OCI-LY7 (cell line): ENCODE measurements at regions of chr22 and their contacts with region 1.

Region 1: DNA sequence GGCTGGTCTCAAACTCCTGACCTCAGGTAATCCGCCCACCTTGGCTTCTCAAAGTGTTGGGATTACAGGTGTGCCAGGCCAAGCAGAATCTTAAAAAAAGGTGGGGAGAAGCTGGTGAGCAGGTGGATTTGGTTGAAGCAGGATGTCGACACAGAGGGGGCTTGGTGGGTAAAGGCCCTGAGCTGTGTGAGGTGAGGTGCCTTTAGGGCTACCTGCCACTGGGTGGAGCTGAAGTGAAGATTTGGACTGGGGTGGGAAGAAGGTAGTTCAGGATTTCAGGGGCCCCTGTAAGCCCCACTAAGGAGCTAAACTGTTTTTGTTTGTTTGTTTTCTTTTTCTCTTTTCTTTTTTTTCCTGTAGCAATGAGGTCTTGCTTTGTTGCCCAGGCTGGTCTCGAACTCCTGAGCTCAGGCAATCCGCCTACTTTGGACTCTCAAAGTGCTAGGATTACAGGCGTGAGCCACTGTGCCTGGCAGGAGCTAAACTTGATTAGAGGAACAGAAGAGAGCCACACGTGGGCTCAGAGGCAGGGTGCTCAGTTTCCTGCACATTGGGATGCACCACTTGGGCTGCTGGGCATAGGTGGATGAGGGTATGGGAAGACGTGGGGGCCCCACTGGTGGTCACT is 6.0 kb downstream of the P2RX6 start:
- DNase-seq: peak; percentile 56
- H3K4me3 ChIP-seq: no peak overlapping the region
- H3K27ac ChIP-seq: no peak overlapping the region
- H3K4me1 ChIP-seq: peaks cover 4% of the 10 kb centered on the region
- CTCF ChIP-seq: peak; percentile 78

Region 2: GRCh38 chr22:20750461-20751184 is 270.3 kb before region 1 on chr22:
- CTCF ChIA-PET with region 1: no interaction called
- POLR2A ChIA-PET with region 1: no interaction called
- intact Hi-C with region 1: no loop called
- DNase-seq: no peak
- H3K4me3 ChIP-seq: no peak overlapping the region
- H3K27ac ChIP-seq: no peak overlapping the region
- H3K4me1 ChIP-seq: peaks cover 10% of the 10 kb centered on the region
- CTCF ChIP-seq: no peak

Region 3: GRCh38 chr22:21098099-21098671 is 77.3 kb after region 1 on chr22:
- CTCF ChIA-PET with region 1: no interaction called
- POLR2A ChIA-PET with region 1: no interaction called
- intact Hi-C with region 1: loop called (anchors 10 kb)
- DNase-seq: peak; percentile 10
- H3K4me3 ChIP-seq: no peak overlapping the region
- H3K27ac ChIP-seq: no peak overlapping the region
- H3K4me1 ChIP-seq: peaks cover 3% of the 10 kb centered on the region
- CTCF ChIP-seq: peak; percentile 64